Mammary epithelial cell (primary cell): ENCODE measurements at regions of chr7 and their contacts with region 1.

Region 1: DNA sequence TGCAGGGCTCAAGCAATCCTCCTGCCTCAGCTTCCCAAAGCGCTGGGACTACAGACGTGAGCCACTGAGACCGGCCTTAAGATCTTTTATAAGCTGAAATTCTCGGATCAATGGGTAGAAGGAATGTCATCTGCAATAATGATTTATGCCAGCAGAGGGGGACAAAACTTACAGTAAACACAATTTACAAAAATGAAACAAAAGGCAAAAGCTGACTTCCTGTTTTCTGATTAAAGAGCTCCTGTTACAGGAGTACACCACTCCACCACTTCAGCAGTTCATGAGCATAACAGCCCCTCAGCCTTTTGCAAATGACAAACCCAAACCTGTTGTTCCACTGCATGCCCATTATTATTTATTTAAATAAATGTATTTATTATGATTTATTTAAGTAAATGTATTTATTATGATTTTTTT is 88.5 kb upstream of the ATP6V0A4 start:
- DNase-seq: peak; percentile 40
- H3K4me3 ChIP-seq: no peak overlapping the region
- H3K27ac ChIP-seq: no peak overlapping the region
- H3K4me1 ChIP-seq: no peaks in the 10 kb centered on the region
- H3K27me3 ChIP-seq: no peaks in the 10 kb centered on the region
- CTCF ChIP-seq: peak; percentile 59 to 71

Region 2: DNA sequence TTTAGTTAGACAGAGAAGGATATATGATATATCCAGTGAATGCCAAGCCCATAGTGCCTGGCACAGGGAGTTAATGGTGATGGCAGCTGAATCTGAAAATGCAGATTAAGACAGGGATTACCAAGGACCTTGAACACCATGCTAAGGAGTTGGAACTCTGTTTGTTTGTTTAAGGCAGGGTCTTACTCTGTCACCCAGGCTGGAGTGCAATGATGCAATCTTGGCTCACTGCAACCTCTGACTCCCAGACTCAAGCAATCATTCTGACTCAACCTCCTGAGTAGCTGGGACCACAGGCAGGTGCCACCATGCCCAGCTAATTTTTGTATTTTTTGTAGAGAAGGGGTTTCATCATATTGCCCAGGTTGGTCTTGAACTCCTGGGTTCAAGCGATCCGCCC is 808.7 kb before region 1 on chr7:
- CTCF ChIA-PET with region 1: no interaction called
- dilution Hi-C with region 1: no loop called
- in situ Hi-C with region 1: no loop called
- intact Hi-C with region 1: no loop called
- DNase-seq: peak; percentile 30
- H3K4me3 ChIP-seq: no peak overlapping the region
- H3K27ac ChIP-seq: no peak overlapping the region
- H3K4me1 ChIP-seq: peaks cover 15% of the 10 kb centered on the region
- H3K27me3 ChIP-seq: no peaks in the 10 kb centered on the region
- CTCF ChIP-seq: no peak

Region 3: DNA sequence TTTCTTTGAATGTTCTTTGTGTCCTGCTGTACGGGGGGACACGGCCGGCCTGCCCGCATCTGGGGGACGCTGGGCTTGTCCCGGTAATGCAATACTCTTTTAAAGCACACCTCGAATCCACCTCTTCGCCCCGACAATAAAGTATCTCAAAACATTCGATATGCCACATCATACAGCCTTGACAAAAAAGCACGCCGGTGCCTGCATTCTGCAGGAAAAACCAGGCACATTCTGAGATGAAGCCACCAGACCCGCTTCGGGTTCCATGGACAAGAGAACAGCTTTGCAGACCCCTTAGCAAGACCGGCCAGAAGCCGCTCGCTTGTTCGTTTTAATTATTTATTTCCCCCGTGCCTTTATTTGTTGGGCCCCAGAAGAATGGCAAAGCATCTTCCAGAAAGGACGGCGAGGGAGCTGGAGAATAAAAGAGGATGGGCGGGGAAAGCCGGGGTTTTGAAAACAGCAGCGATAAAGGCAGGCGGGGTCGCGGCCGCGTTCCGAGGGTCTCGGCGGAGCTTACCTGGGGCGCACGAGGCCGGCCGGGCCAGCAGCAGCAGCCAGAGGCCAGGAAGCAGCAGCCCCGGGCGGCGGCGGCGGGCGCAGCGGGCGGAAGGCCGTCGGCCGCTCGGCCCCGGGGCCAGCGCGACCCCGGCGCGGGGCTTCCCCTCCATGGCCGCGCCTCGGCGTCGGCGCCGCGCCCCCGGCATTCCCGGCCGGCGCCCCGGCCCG is 94.2 kb after region 1 on chr7:
- CTCF ChIA-PET with region 1: interaction called, 7 read pairs
- dilution Hi-C with region 1: no loop called
- in situ Hi-C with region 1: no loop called
- intact Hi-C with region 1: loop called (anchors 1 kb)
- DNase-seq: peak; percentile 17
- H3K4me3 ChIP-seq: peak overlapping the region; percentile 53 to 96 (median 79)
- H3K27ac ChIP-seq: peak overlapping the region; percentile 27
- H3K4me1 ChIP-seq: peaks cover 22% of the 10 kb centered on the region
- H3K27me3 ChIP-seq: no peaks in the 10 kb centered on the region
- CTCF ChIP-seq: no peak

Region 4: DNA sequence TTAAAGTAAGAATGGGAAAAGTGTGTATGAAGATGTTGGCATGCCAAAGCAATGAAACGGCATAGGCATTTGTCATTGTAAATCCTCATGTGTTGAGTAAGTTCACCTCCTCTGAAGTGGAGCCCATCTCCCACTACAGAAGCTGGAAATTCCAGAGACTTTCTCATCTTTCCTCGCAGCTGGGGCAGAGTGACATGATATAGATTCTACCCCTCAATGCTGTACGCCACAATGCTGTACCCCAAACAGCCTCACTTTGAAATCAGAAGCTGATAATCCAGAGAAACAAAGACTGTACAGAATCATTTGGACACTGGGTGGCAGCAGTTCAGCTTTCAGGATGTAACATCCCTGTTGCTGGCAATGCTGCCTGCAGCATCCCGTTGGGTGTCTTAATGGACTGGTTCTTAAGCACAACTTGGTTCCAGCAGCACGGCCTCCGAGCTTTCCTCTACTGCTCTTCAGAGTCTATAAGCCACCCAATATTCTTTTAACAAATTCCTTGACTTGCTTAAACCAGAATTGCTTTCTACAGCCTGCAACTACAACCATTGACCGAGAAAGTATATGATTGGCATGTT is 130.5 kb after region 1 on chr7:
- CTCF ChIA-PET with region 1: no interaction called
- dilution Hi-C with region 1: no loop called
- in situ Hi-C with region 1: no loop called
- intact Hi-C with region 1: loop called (anchors 1 kb)
- DNase-seq: peak; percentile 50
- H3K4me3 ChIP-seq: no peak overlapping the region
- H3K27ac ChIP-seq: no peak overlapping the region
- H3K4me1 ChIP-seq: no peaks in the 10 kb centered on the region
- H3K27me3 ChIP-seq: no peaks in the 10 kb centered on the region
- CTCF ChIP-seq: peak; percentile 54 to 79

Region 5: DNA sequence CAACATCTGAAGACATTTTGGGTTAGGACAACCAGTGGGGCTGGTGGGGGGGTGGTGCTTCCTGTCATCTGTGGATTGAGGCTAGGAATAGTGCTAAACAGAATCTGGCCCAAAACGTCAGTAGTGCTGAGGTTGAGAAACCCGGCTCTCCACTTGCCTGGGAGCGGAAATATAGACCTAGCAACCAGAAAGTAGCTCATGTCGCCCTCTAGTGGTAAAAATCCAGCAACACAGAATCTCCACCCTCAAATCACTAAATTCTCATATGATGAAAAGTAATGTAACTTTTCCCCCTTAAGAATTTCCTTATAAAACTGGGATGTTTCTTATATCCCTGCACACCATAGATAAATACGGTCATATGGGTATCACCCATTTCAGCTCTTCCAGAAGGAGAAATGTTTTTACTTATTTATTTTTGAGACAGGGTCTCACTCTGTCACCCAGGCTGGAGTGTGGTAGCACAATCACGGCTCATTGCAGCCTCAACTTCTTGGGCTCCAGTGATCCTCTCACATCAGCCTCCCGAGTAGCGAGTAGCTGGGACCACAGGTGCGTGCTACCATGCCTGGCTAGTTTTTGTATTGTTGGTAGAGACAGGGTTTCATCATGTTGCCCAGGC is 188.6 kb after region 1 on chr7:
- CTCF ChIA-PET with region 1: interaction called, 9 read pairs
- dilution Hi-C with region 1: no loop called
- in situ Hi-C with region 1: loop called in 1 of 2 experiments (anchors 10 kb)
- intact Hi-C with region 1: loop called (anchors 1 kb)
- DNase-seq: peak; percentile 53
- H3K4me3 ChIP-seq: no peak overlapping the region
- H3K27ac ChIP-seq: no peak overlapping the region
- H3K4me1 ChIP-seq: no peaks in the 10 kb centered on the region
- H3K27me3 ChIP-seq: no peaks in the 10 kb centered on the region
- CTCF ChIP-seq: peak; percentile 74 to 89